Naive thymus-derived CD4-positive, alpha-beta T cell (primary cell): ENCODE measurements at regions of chr1 and their contacts with region 1.

Region 1: DNA sequence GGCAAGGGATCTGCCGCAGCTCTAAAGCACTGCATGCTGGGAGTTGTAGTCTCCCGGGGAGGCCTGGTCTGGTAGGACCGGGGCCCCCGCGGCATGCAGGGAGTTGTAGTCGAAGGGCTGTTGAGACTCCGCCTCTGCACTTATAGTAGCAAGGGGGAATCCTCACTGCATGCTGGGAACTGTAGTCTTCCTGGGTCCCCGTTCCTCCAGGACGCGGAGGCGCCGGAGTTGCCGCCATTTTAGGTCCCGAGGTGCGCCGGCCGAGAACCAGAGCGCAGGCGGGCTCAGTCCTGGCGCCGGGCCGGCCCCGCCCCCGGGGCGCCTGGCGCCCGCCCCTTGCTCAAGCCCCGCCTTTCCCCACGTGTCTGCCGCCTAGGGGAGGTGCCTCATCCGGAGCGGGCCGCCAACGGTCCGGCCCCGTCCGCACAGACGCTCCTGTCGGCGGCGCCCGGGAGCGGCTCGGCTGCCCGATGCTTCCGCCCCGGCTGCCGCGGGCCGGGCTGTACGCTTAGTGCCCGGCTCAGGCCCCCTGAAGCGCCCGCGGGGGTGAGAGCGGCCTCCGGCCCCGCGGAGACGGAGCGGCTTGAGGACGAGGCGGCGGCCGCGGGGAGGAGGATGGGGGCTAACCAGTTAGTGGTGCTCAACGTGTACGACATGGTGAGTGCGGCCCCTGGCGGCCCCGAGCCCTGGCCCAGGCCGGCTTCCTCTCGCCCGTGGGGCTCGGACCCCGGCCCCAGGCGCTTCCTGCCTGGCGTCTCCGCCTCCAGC is at the start of gene DESI2:
- DNase-seq: peak; percentile 95 to 100 (median 98)
- ATAC-seq: peak; percentile 95
- H3K4me3 ChIP-seq: peak within 1 kb of the TSS; percentile 75
- H3K4me3 Mint-ChIP-seq: peak within 1 kb of the TSS in 9 of 10 donors; percentile 83 to 91 (median 88)
- H3K27ac ChIP-seq: peak within 1 kb of the TSS; percentile 87
- H3K27ac Mint-ChIP-seq: peak within 1 kb of the TSS; percentile 81 to 96 (median 90)
- H3K4me1 ChIP-seq: peaks cover 19 to 24% of the 10 kb centered on the region in 2 donors
- H3K4me1 Mint-ChIP-seq: peaks cover 19 to 33% (median 21%) of the 10 kb centered on the region in 7 donors
- H3K27me3 ChIP-seq: no peaks in the 10 kb centered on the region
- H3K27me3 Mint-ChIP-seq: no peaks in the 10 kb centered on the region
- total RNA-seq, gene DESI2: 13.0 to 23.4 (median 17.6) TPM

Region 2: GRCh38 chr1:243850452-243851256 is 802.2 kb before region 1 on chr1:
- CTCF ChIA-PET with region 1: no interaction called
- POLR2A ChIA-PET with region 1: no interaction called
- intact Hi-C with region 1: loop called (anchors 2 to 10 kb)
- DNase-seq: peak; percentile 79 to 88 (median 84)
- ATAC-seq: peak; percentile 64
- H3K4me3 ChIP-seq: peak overlapping the region; percentile 75
- H3K4me3 Mint-ChIP-seq: peak overlapping the region; percentile 90 to 97 (median 93)
- H3K27ac ChIP-seq: peak overlapping the region; percentile 97
- H3K27ac Mint-ChIP-seq: peak overlapping the region; percentile 88 to 99 (median 93)
- H3K4me1 ChIP-seq: peaks cover 4 to 5% of the 10 kb centered on the region in 2 donors
- H3K4me1 Mint-ChIP-seq: peaks cover 8 to 47% (median 30%) of the 10 kb centered on the region in 7 donors
- H3K27me3 ChIP-seq: no peaks in the 10 kb centered on the region
- H3K27me3 Mint-ChIP-seq: peaks cover 0 to 59% (median 0%) of the 10 kb centered on the region in 5 donors

Region 3: GRCh38 chr1:244451951-244452795 is 200.7 kb before region 1 on chr1:
- CTCF ChIA-PET with region 1: no interaction called
- POLR2A ChIA-PET with region 1: interaction called, 12 read pairs
- intact Hi-C with region 1: loop called (anchors 1 kb)
- DNase-seq: peak; percentile 93 to 99 (median 99)
- ATAC-seq: peak; percentile 94
- H3K4me3 ChIP-seq: peak overlapping the region; percentile 64
- H3K4me3 Mint-ChIP-seq: peak overlapping the region; percentile 76 to 99 (median 93)
- H3K27ac ChIP-seq: peak overlapping the region; percentile 96
- H3K27ac Mint-ChIP-seq: peak overlapping the region; percentile 85 to 99 (median 97)
- H3K4me1 ChIP-seq: peaks cover 27 to 36% of the 10 kb centered on the region in 2 donors
- H3K4me1 Mint-ChIP-seq: peaks cover 29 to 56% (median 41%) of the 10 kb centered on the region in 7 donors
- H3K27me3 ChIP-seq: no peaks in the 10 kb centered on the region
- H3K27me3 Mint-ChIP-seq: no peaks in the 10 kb centered on the region

Region 4: DNA sequence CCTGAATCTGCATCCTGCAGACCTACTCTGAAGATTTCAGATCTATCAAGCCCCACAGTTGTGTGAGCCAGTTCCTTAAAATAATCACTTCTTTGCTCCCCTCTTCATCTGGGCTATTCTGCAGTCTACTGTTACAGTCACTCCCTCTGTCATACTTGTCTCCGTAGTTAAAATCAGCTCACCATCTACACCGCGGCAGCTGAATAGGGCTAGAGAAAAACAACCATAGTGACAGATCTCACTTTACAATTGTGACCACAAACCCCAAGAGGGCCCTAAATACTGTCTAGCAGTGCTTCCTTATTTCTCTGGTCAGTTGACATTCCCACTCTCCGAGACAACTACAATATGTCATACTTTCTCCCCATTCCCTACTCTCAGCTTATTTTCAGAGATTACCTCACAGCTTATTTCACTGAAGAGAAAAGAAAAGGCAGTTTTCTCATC is 12.9 kb after region 1 on chr1:
- CTCF ChIA-PET with region 1: no interaction called
- POLR2A ChIA-PET with region 1: no interaction called
- intact Hi-C with region 1: no loop called
- DNase-seq: no peak
- ATAC-seq: peak; percentile 78
- H3K4me3 ChIP-seq: no peak overlapping the region
- H3K4me3 Mint-ChIP-seq: no peak overlapping the region
- H3K27ac ChIP-seq: no peak overlapping the region
- H3K27ac Mint-ChIP-seq: no peak overlapping the region
- H3K4me1 ChIP-seq: peaks cover 0 to 12% of the 10 kb centered on the region in 2 donors
- H3K4me1 Mint-ChIP-seq: peaks cover 2 to 25% (median 14%) of the 10 kb centered on the region in 7 donors
- H3K27me3 ChIP-seq: no peaks in the 10 kb centered on the region
- H3K27me3 Mint-ChIP-seq: no peaks in the 10 kb centered on the region

Region 5: DNA sequence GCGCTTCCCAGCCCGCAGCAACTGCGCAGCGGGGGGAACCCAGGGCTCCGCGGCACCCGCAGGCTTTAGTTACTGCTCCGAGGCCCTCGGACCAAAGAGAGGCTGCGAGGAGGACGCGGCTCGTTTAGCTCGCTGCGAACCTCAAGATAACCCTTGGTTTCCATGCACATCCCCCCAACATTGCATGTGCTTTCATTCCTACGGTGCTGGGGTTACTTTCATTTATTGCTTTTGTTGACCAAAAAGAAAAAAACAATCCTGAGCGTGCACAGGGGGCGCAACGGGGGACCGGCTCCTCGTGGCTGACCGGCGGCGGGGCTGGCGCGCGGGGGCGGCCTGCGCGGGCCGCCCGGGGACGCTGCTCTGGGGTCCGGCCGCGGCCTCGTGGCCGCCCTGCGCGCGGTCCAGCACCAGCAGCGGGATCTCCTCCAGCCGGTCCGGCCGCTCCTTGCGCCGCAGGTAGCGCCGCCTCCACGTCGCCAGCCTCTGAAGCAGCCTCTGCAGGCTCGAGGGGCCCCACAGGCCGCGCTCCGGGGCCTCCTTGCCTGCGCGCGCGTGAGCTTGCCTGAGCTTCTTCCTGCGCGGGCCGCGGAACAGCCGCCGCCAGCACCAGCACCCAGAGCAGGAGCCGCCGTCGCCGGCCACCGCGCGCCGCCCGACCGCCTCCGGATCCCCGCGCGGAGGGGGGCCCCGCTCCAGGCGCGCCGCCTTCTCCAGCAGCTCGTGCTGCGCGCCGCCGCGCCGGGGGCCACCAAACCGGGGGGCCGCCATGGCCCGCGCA is 77.5 kb after region 1 on chr1:
- CTCF ChIA-PET with region 1: no interaction called
- POLR2A ChIA-PET with region 1: no interaction called
- intact Hi-C with region 1: loop called (anchors 1 to 2 kb)
- DNase-seq: peak in 7 of 9 donors; percentile 18 to 48 (median 28)
- ATAC-seq: peak; percentile 55
- H3K4me3 ChIP-seq: peak overlapping the region; percentile 59
- H3K4me3 Mint-ChIP-seq: peak overlapping the region; percentile 87 to 95 (median 92)
- H3K27ac ChIP-seq: no peak overlapping the region
- H3K27ac Mint-ChIP-seq: peak overlapping the region in 6 of 9 donors; percentile 36 to 84 (median 65)
- H3K4me1 ChIP-seq: no peaks in the 10 kb centered on the region
- H3K4me1 Mint-ChIP-seq: peaks cover 0 to 18% (median 11%) of the 10 kb centered on the region in 7 donors
- H3K27me3 ChIP-seq: no peaks in the 10 kb centered on the region
- H3K27me3 Mint-ChIP-seq: peaks cover 0 to 45% (median 5%) of the 10 kb centered on the region in 5 donors

Region 6: GRCh38 chr1:244864253-244865027 is 211.6 kb after region 1 on chr1 and contains the start of gene HNRNPU:
- CTCF ChIA-PET with region 1: interaction called, 4 read pairs
- POLR2A ChIA-PET with region 1: interaction called, 7 read pairs
- intact Hi-C with region 1: loop called (anchors 1 kb)
- DNase-seq: peak; percentile 93 to 99 (median 98)
- ATAC-seq: peak; percentile 81
- H3K4me3 ChIP-seq: peak within 1 kb of the TSS; percentile 78
- H3K4me3 Mint-ChIP-seq: peak within 1 kb of the TSS; percentile 86 to 98 (median 98)
- H3K27ac ChIP-seq: peak within 1 kb of the TSS; percentile 100
- H3K27ac Mint-ChIP-seq: peak within 1 kb of the TSS; percentile 93 to 100 (median 98)
- H3K4me1 ChIP-seq: peaks cover 23 to 25% of the 10 kb centered on the region in 2 donors
- H3K4me1 Mint-ChIP-seq: peaks cover 39 to 56% (median 51%) of the 10 kb centered on the region in 7 donors
- H3K27me3 ChIP-seq: no peaks in the 10 kb centered on the region
- H3K27me3 Mint-ChIP-seq: peaks cover 0 to 3% (median 0%) of the 10 kb centered on the region in 5 donors
- total RNA-seq, gene HNRNPU: 378 to 509 (median 428) TPM

Region 7: GRCh38 chr1:245156081-245156735 is 503.3 kb after region 1 on chr1:
- CTCF ChIA-PET with region 1: no interaction called
- POLR2A ChIA-PET with region 1: no interaction called
- intact Hi-C with region 1: loop called (anchors 2 to 5 kb)
- DNase-seq: peak; percentile 28 to 83 (median 58)
- ATAC-seq: peak; percentile 93
- H3K4me3 ChIP-seq: peak overlapping the region; percentile 52
- H3K4me3 Mint-ChIP-seq: peak overlapping the region; percentile 76 to 88 (median 83)
- H3K27ac ChIP-seq: no peak overlapping the region
- H3K27ac Mint-ChIP-seq: peak overlapping the region in 1 of 9 donors; percentile 29
- H3K4me1 ChIP-seq: peaks cover 15 to 20% of the 10 kb centered on the region in 2 donors
- H3K4me1 Mint-ChIP-seq: peaks cover 0 to 28% (median 26%) of the 10 kb centered on the region in 7 donors
- H3K27me3 ChIP-seq: peaks cover 3 to 13% of the 10 kb centered on the region in 2 donors
- H3K27me3 Mint-ChIP-seq: peaks cover 53 to 71% (median 67%) of the 10 kb centered on the region in 5 donors